Breast epithelium (tissue), 4 donors: ENCODE measurements at regions of chr3 and their contacts with region 1.

Region 1: GRCh38 chr3:149625795-149626194 is 32.0 kb downstream of the WWTR1 start:
- DNase-seq: no peak
- H3K4me3 ChIP-seq: no peak overlapping the region
- H3K27ac ChIP-seq: no peak overlapping the region
- H3K4me1 ChIP-seq: no peaks in the 10 kb centered on the region
- H3K27me3 ChIP-seq: no peaks in the 10 kb centered on the region
- CTCF ChIP-seq: no peak
- POLR2A ChIP-seq: no peak

Region 2: DNA sequence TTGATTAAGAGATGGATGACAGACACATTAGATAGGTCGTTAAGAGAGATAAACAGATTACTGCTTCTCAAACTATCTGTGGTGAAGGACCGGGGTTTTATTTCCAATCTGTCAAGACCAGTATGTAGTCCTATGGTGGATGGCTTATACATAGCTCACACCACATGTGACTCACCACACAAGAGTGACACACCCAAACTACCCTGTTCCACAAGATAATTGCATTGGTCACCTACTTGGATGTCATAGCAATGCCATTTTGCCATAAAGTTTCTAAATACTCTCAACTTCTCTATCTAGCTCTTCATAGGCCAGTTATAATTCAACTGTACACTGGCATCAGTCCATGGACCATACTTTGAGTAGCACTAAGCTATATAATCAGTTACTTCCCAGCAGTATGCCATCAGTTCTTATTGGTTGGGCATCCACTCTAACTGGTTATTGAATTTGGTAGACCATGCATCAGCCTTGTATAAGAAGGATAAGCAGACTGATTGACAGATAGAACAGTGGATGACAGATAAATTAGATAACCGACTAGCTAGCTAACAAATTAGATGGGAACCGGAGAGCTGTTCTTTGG is 20.5 kb after region 1 on chr3:
- intact Hi-C with region 1: loop called (anchors 2 kb)
- DNase-seq: no peak
- H3K4me3 ChIP-seq: no peak overlapping the region
- H3K27ac ChIP-seq: peak overlapping the region in 1 of 2 donors; percentile 30
- H3K4me1 ChIP-seq: peaks cover 0 to 27% of the 10 kb centered on the region in 2 donors
- H3K27me3 ChIP-seq: no peaks in the 10 kb centered on the region
- CTCF ChIP-seq: no peak
- POLR2A ChIP-seq: no peak